GM13977 (cell line): ENCODE measurements at regions of chr11 and their contacts with region 1.

Region 1: DNA sequence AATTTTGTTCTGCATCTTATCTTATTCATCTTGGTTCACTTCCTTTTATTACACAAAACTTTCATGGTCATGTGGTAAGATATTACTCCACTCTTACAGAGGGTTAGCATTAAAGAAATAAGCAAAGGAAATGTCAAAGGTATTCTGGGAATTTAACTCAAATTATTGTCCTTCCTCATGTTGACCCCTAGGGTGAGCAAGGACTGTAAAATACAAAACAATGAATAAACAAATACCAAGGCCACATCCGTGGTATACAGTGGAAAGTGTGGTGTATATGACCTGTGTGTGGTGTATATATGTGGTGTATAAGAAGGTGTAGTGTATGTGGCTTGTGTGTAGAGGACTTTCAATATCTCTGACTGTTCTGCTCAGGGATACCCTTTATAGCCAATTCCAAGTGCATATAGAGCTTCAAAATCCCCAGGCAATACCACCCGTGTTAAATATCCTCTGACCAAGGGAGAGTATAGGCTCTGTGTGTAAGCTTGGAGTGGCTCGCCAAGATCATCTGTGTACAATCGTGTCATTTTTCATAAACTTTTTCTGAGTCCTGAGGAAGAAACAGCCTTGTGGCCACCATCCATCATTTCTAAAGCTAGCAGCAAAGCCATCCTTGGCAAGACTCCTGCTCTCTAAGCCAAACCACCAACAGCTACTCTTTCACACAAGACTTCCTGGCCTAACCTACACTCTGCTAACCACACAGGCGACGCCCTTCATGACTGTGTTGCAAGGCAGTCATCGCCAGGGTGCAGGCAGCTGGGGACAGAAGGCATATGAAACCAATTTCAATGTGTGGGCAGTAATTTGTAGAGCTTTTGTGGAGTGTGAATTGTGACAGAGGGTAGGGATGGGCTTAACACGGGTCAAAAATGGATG is 548.0 kb downstream of the ETS1 start:
- DNase-seq: no peak
- CTCF ChIP-seq: no peak

Region 2: GRCh38 chr11:128497061-128497775 is 457.8 kb after region 1 on chr11:
- in situ Hi-C with region 1: loop called (anchors 25 kb)
- DNase-seq: peak; percentile 46
- CTCF ChIP-seq: no peak